Activated CD4-positive, alpha-beta T cell treated with anti-CD3 and anti-CD28 coated beads, Interleukin-2, amount 10 ng/mL, durations not matched to agents 24 days and 14 days (primary cell): ENCODE measurements at regions of chr9 and their contacts with region 1.

Region 1: GRCh38 chr9:110623462-110624025 is 44.0 kb upstream of the SVEP1 start:
- DNase-seq: peak; percentile 74
- H3K4me3 Mint-ChIP-seq: no peak overlapping the region
- H3K27ac Mint-ChIP-seq: no peak overlapping the region
- H3K4me1 Mint-ChIP-seq: peaks cover 6% of the 10 kb centered on the region
- H3K27me3 Mint-ChIP-seq: no peaks in the 10 kb centered on the region

Region 2: GRCh38 chr9:110183208-110184145 is 440.1 kb before region 1 on chr9:
- intact Hi-C with region 1: loop called (anchors 2 kb)
- DNase-seq: peak; percentile 88
- H3K4me3 Mint-ChIP-seq: no peak overlapping the region
- H3K27ac Mint-ChIP-seq: no peak overlapping the region
- H3K4me1 Mint-ChIP-seq: peaks cover 13% of the 10 kb centered on the region
- H3K27me3 Mint-ChIP-seq: peaks cover 5% of the 10 kb centered on the region

Region 3: DNA sequence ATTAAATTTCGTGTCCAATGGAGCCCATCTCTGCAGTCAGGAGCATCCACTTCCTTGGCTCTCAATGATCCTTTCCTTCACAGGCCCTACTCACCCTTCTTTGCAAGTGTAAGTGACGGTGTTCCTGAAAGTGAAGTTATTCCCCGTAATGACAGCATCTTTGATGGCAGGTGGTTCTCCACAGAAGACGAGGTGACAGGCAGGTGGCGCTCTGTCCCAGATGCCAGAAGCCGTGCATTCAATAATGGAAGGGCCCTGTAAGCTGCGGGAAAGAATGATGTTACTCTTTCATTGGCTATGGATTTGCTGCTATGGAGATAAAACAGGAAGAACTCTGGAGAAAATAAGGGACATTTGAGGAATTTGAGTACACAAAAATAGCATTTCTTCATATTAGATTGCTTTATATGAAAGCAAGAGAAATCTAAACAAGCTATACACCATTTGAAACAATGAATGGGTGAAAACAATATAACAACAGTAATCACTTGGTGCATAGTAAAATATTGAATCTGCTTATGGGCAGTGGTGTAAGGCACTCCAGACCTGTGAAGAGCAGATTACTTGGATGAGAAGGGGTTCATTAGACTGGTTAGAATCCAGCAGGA is 195.9 kb before region 1 on chr9:
- intact Hi-C with region 1: loop called (anchors 10 kb)
- DNase-seq: peak; percentile 75
- H3K4me3 Mint-ChIP-seq: no peak overlapping the region
- H3K27ac Mint-ChIP-seq: no peak overlapping the region
- H3K4me1 Mint-ChIP-seq: no peaks in the 10 kb centered on the region
- H3K27me3 Mint-ChIP-seq: no peaks in the 10 kb centered on the region

Region 4: DNA sequence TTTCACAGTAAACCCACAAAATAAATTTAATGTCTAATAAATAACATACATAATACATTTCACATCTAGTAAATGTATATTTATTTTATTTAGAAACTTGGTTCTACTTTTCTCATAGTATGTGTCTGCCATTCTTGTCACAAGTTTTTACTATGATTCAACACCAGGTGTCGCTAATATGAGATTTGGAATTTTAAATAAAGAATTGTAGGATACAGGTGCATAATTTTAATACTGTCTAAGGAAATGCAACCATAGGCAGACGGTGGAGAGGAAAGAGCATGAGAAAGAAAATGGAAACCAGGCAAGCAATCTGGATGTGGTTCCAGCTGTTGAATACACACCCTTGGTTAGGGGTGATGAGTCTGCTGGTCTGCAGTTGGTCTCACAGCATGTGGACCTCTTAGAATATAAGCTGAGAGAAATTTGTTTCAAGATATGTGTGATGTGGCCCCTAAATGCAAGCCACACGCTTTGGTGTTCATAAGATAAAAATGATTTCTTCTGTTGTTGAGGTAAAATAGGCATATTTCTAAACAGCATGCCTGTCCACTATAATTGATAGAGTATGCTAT is 171.2 kb before region 1 on chr9:
- intact Hi-C with region 1: loop called (anchors 2 kb)
- DNase-seq: no peak
- H3K4me3 Mint-ChIP-seq: no peak overlapping the region
- H3K27ac Mint-ChIP-seq: no peak overlapping the region
- H3K4me1 Mint-ChIP-seq: no peaks in the 10 kb centered on the region
- H3K27me3 Mint-ChIP-seq: no peaks in the 10 kb centered on the region